ENCODE measurements at regions of chr1 and their contacts with region 1.

Region 1: DNA sequence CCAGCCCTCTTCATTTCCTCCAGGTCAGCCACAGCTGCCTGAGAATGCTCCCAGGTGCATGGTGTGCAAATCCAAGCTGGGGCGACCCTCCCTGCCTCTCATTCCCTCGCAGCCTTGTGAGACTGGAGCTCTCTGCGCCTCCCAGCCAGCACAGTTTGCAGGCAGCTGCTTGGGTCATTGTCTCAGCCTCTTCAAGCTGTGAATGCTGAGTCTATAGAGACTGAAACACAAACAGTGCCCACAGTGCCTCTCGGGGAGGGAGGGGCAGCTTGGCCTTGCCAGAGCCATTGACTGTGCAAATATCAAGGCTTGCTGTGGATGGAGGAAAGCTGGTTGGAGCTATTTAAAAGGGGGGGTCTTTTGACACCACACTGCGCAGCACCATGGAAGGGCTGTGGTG is 10.6 kb downstream of the PLXNA2 start:
- DNase-seq: peak; percentile 36
- H3K4me3 ChIP-seq: no peak overlapping the region
- H3K27ac ChIP-seq: no peak overlapping the region
- H3K4me1 ChIP-seq: no peaks in the 10 kb centered on the region
- H3K27me3 ChIP-seq: no peaks in the 10 kb centered on the region
- CTCF ChIP-seq: no peak
- POLR2A ChIP-seq: no peak

Region 2: GRCh38 chr1:208036109-208036808 is 197.3 kb before region 1 on chr1:
- intact Hi-C with region 1: no loop called
- DNase-seq: no peak
- H3K4me3 ChIP-seq: no peak overlapping the region
- H3K27ac ChIP-seq: no peak overlapping the region
- H3K4me1 ChIP-seq: no peaks in the 10 kb centered on the region
- H3K27me3 ChIP-seq: no peaks in the 10 kb centered on the region
- CTCF ChIP-seq: peak in 1 of 4 experiments; percentile 32
- POLR2A ChIP-seq: no peak

Region 3: GRCh38 chr1:208159555-208160258 is 73.8 kb before region 1 on chr1:
- intact Hi-C with region 1: loop called (anchors 5 kb)
- DNase-seq: no peak
- H3K4me3 ChIP-seq: no peak overlapping the region
- H3K27ac ChIP-seq: peak overlapping the region; percentile 44 to 49
- H3K4me1 ChIP-seq: no peaks in the 10 kb centered on the region
- H3K27me3 ChIP-seq: no peaks in the 10 kb centered on the region
- CTCF ChIP-seq: no peak
- POLR2A ChIP-seq: no peak